ENCODE measurements at regions of chr5 and their contacts with region 1.

Region 1: DNA sequence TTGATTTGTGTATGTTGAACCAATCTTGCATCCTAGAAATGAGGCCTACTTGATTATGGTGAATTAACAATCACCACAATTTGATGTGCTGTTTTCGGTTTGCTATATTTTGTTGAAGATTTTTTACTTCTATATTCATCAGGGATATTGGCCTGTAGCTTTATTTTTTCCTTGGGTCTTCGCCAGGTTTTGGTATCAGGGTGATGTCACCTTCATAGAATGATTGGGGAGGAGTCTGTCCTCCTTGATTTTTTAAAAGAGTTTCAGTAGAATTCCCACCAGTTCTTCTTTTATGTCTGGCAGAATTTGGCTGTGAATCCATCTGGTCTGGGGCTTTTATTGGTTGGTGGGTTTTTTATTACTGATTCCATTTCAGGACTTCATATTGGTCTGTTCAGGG is 115.2 kb downstream of the CPLANE1 start:
- DNase-seq: no peak
- ATAC-seq: no peak
- H3K4me3 ChIP-seq: no peak overlapping the region
- H3K27ac ChIP-seq: no peak overlapping the region
- H3K4me1 ChIP-seq: no peaks in the 10 kb centered on the region
- H3K27me3 ChIP-seq: no peaks in the 10 kb centered on the region
- CTCF ChIP-seq: no peak
- EP300 ChIP-seq: no peak
- POLR2A ChIP-seq: no peak
- RAD21 ChIP-seq: no peak

Region 2: DNA sequence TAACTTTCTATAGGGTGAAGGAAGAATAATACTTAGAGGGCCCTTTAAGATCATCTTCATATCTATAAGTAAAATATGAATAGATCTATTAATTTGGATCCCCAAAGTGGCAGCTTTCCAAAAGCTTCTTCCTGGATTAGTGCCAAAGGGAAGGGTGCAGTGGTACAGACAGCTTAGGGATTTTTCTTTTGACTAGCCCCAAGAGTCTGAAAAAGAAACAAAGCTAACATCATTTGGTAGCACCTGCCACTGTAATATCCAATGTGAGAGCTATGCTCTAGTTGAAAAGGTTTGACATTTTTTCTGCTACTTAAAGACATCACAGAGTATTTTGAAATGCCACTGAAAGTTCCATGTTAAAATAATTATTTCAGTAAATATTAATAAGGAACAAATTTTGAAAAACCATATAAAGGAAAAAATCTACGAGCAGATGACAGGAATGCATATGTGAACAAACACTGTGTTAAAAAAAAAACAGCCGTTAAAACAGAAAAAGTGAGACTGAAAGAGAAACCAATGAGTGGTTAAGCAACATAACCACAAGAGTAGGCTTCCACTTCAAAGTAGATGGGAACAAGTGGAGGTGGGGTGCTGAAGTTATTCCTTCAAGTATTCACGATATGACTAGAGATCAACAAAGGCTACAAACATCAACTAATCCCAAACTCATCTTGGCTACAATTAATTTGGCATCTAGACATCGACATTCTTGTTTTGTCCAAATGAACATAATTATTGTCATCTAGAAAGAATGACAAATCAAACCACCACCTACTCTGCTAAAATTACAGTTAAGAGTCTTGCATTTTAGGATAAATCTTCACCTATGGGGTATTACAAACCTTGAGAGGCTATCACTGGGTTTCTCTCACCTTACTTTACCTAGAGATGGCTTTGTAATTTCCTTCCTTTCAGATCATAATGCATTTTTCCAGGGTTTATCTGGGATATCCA is 22.2 kb before region 1 on chr5:
- CTCF ChIA-PET with region 1: no interaction called
- POLR2A ChIA-PET with region 1: no interaction called
- in situ Hi-C with region 1: no loop called
- intact Hi-C with region 1: no loop called
- DNase-seq: no peak
- ATAC-seq: no peak
- H3K4me3 ChIP-seq: no peak overlapping the region
- H3K27ac ChIP-seq: no peak overlapping the region
- H3K4me1 ChIP-seq: peaks cover 13% of the 10 kb centered on the region
- H3K27me3 ChIP-seq: no peaks in the 10 kb centered on the region
- CTCF ChIP-seq: no peak
- EP300 ChIP-seq: no peak
- POLR2A ChIP-seq: no peak
- RAD21 ChIP-seq: no peak

Region 3: DNA sequence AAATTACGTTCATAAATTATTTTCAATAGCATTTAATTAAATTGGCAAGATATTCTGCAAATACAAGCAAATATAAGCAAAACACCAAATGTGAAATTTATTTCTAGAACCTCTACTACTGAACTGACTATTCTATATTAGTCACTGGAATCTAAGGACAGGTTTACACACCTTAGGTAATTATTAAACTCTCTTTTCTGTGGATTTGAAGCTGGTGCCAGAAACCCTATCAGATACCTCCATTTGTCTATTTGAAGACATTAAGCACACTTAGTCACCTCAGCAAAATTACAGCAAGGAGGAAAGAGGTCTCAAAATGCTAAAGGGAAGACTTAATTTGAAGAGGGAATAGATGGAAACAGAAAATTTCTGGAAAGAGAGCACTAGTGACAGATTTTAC is 31.8 kb after region 1 on chr5:
- CTCF ChIA-PET with region 1: no interaction called
- POLR2A ChIA-PET with region 1: no interaction called
- in situ Hi-C with region 1: no loop called
- intact Hi-C with region 1: loop called (anchors 1 kb)
- DNase-seq: no peak
- ATAC-seq: no peak; the same call in 2 of the 3 replicates
- H3K4me3 ChIP-seq: no peak overlapping the region
- H3K27ac ChIP-seq: no peak overlapping the region
- H3K4me1 ChIP-seq: peaks cover 9% of the 10 kb centered on the region
- H3K27me3 ChIP-seq: no peaks in the 10 kb centered on the region
- CTCF ChIP-seq: no peak
- EP300 ChIP-seq: no peak
- POLR2A ChIP-seq: no peak
- RAD21 ChIP-seq: no peak